PC-3 (cell line): ENCODE measurements at regions of chr2 and their contacts with region 1.

Region 1: DNA sequence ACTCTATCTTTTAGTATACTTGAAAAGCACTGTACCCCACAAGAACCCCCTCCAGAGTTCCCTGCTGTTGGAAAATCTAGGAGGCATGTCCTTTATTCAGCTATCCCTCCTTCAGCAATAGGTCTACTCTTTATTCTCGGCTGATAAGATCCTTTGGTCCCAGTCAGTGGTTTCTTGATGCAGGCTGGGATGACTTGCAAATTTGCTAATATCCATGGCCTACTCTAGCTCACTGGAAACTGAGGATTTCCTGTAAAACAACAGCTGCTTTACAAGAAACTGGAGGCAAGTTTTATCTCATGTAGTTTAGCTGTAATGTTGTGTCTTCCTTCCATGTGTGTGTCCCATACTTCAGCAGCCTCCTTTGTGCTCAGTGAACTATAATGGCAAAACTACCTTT is 183.9 kb upstream of the SCN7A start:
- DNase-seq: no peak
- ATAC-seq: no peak
- H3K4me3 ChIP-seq: no peak overlapping the region
- H3K27ac ChIP-seq: no peak overlapping the region
- H3K4me1 ChIP-seq: no peaks in the 10 kb centered on the region
- H3K27me3 ChIP-seq: no peaks in the 10 kb centered on the region
- CTCF ChIP-seq: no peak

Region 2: DNA sequence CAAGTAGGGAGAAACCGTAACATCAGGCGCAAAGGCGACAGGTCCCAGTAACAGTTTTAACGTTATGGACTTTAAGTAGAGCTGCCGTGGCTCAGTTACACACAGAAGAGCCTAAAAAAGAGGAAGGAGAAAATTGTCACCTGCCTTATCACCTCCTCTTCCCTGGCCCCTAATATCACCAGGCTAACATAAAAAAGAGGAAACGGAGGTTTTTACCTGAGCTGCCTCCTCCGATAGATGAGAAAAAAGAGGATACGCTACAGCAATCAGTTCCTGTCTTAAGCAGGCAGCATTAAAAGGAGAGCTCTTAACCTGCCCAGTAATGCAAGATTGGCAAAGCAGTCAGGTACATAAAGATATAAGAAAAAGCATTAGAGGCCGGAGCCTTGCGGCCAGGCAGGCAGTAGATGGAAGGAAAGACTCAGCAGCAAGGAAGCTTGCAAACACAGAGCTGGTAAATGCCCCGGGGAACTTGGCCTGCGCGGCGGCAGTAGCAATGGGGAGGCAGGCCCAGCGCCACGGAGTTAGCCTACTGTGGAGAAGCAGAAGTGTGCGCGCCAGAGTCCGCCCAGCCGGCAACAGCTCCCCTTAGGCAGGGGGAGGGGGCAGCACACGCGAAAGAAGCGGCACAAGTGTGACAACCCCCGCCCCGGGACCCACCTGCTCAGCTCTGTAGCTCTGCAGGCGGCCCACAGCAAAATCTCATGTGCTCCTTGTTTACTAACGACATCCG is 67.7 kb before region 1 on chr2:
- CTCF ChIA-PET with region 1: no interaction called
- POLR2A ChIA-PET with region 1: no interaction called
- intact Hi-C with region 1: no loop called
- DNase-seq: no peak
- ATAC-seq: no peak
- H3K4me3 ChIP-seq: no peak overlapping the region
- H3K27ac ChIP-seq: no peak overlapping the region
- H3K4me1 ChIP-seq: no peaks in the 10 kb centered on the region
- H3K27me3 ChIP-seq: no peaks in the 10 kb centered on the region
- CTCF ChIP-seq: no peak

Region 3: DNA sequence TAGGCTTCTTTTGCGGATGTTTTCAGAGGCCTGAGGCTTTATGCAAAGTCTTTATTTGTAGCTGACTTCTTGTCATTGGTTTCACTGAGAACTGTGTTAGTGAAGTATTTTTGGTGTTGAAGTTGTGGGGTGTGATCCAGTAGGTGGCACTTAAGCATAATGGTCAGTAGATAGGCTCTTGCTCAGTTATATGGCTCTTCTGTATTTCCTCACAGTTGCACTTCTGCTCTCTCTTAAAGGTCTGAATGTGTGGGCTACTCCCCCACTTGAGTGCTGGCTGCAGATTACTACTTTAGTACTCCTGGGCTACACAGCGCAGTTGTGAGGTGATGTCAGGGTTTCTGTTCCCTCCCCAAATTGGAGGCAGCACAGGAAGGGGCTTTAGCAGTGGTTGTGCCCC is 50.1 kb before region 1 on chr2:
- CTCF ChIA-PET with region 1: interaction called, 14 read pairs
- POLR2A ChIA-PET with region 1: no interaction called
- intact Hi-C with region 1: no loop called
- DNase-seq: peak; percentile 19
- ATAC-seq: peak; percentile 48
- H3K4me3 ChIP-seq: no peak overlapping the region
- H3K27ac ChIP-seq: no peak overlapping the region
- H3K4me1 ChIP-seq: peaks cover 26% of the 10 kb centered on the region
- H3K27me3 ChIP-seq: no peaks in the 10 kb centered on the region
- CTCF ChIP-seq: peak; percentile 25; the same call in 1 of the 2 replicates